HEK293 (cell line): ENCODE measurements at regions of chr17 and their contacts with region 1.

Region 1: DNA sequence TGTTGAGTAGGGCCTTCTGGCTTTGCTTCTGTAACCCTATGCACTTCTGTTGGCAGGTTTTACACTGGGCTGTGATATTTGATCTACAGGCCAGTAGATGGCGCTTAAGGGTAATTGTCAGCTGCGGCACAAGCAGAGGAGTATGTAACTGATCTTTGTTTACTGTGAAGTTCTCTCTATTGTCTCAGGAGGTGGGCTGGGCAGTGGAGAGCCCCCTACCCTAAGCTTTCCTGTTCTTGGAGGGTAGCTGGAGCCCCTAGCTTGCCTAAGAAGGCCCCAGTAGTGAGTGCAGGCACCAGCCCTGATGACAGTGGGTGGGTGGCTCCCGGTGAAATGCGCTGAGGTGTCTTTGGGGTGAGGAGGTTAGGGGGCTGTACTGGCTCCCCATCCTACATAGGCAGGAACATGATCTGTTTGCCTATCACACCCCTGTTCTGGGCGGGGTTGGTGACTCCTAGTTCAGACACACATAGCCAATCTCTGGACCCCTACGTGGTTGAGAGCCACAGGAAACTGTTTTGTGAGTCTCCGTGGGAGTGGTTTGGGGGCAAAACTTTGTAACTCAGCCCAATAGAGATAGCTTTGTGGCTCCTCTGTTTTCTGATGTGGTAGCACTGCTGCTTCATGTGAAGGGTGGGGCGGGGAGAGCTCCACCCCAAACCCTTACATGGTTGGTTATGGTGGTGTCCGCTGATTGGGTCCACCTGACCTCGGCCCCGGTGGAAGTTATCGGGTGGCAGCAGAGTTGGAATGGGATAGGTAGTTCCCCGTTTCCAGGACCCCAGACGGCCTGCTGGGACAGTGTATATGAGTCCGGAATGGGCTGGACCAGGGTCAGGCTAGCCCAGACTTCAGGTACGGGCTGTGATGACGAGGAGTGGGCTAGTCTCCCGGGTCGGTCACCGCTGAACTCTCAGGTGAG is 60.4 kb downstream of the SLFN11 start:
- H3K4me3 ChIP-seq: no peak overlapping the region
- H3K27ac ChIP-seq: no peak overlapping the region
- H3K4me1 ChIP-seq: no peaks in the 10 kb centered on the region
- CTCF ChIP-seq: peak; percentile 54

Region 2: DNA sequence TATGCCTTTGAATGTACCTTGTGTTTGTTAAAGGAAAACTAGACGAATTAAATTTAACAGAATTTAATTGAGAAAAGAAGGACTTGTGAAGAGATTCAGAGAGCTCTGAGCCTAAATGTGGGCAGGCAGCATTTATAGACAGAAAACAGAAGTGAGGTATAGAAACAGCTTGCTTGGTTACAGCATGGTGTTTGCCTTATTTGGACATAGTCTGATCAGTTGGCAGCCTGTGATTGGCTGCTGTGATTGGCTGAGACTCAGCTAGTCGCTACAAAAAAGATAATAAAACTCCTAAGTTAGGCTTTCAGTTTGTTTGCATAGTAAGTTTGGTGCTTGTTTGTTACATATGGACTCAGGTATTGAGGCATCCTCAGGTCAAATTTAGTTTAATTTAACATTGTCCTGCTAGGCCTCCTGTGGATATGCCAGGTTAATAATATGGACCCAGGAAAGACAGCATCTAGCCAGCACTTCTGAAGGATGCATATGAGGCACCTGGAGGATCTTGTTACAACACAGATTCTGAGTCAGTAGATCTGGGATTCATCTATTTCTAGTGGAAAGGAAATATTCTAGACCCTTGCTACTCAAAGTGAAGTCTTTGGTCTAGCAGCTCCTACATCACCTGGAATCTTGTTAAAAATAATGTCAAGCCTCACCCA is 26.8 kb before region 1 on chr17:
- CTCF ChIA-PET with region 1: interaction called, 12 read pairs
- POLR2A ChIA-PET with region 1: no interaction called
- H3K4me3 ChIP-seq: no peak overlapping the region
- H3K27ac ChIP-seq: no peak overlapping the region
- H3K4me1 ChIP-seq: peaks cover 4% of the 10 kb centered on the region; the same call in 1 of the 2 replicates
- CTCF ChIP-seq: no peak

Region 3: DNA sequence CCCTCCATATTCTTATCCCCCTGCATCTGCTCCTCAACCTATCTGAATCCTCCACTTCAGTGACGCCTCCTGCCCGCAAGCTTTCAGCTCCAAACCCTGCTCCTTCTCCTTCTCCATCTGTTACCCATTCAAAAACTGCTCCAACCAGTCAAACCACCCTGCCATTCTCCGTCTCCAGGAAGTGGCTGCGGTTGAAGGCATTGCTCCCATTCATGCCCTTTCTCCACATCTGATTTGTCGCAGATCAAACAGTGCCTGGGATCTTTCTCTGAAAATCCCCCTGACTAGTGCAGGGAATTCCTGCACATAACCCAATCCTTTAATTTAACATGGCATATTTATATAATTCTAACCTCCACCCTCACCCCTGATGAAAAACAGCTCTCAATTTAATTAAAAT is 13.9 kb before region 1 on chr17:
- CTCF ChIA-PET with region 1: interaction called, 17 read pairs
- POLR2A ChIA-PET with region 1: no interaction called
- H3K4me3 ChIP-seq: no peak overlapping the region
- H3K27ac ChIP-seq: no peak overlapping the region
- H3K4me1 ChIP-seq: no peaks in the 10 kb centered on the region
- CTCF ChIP-seq: no peak

Region 4: GRCh38 chr17:35521150-35521549 is 208.1 kb after region 1 on chr17:
- CTCF ChIA-PET with region 1: interaction called, 10 read pairs
- POLR2A ChIA-PET with region 1: no interaction called
- H3K4me3 ChIP-seq: no peak overlapping the region
- H3K27ac ChIP-seq: no peak overlapping the region
- H3K4me1 ChIP-seq: peaks cover 9% of the 10 kb centered on the region
- CTCF ChIP-seq: no peak

Region 5: DNA sequence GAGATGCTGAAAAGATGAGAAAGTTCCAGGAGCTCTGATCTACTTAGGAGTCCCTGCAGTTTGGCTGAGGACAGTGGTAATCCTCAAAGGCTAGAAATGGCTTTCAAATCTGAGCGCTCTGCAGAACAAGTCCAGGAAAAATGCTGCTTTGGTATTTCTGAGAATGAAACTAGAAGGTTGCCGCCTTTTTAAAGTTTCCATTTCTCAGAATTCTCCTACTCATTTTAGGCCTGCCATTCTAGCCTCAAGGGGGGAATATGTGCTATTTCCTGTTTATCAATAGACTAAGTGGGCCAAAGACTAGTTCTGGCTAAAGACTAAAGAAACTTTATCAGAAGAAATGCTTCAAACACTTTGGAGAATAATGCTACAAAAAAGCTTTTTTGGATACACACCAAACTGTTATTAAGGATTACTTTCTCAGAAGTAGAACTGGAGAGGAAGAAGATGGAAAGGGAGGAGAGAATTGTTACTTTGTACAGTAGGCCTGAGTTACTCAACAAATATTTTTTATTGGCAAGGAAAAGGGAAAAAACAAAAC is 224.6 kb after region 1 on chr17 and contains the start of gene SLFN12L:
- CTCF ChIA-PET with region 1: interaction called, 236 read pairs
- POLR2A ChIA-PET with region 1: no interaction called
- H3K4me3 ChIP-seq: no peak within 1 kb of the TSS
- H3K27ac ChIP-seq: no peak within 1 kb of the TSS
- H3K4me1 ChIP-seq: peaks cover 3% of the 10 kb centered on the region; the same call in 1 of the 2 replicates
- CTCF ChIP-seq: no peak

Region 6: GRCh38 chr17:35543856-35544255 is 230.8 kb after region 1 on chr17:
- CTCF ChIA-PET with region 1: interaction called, 236 read pairs
- POLR2A ChIA-PET with region 1: no interaction called
- H3K4me3 ChIP-seq: no peak overlapping the region
- H3K27ac ChIP-seq: no peak overlapping the region
- H3K4me1 ChIP-seq: peaks cover 3% of the 10 kb centered on the region; the same call in 1 of the 2 replicates
- CTCF ChIP-seq: no peak